AG04449 (cell line): ENCODE measurements at regions of chr7 and their contacts with region 1.

Region 1: GRCh38 chr7:157250605-157251228 is 86.1 kb upstream of the DNAJB6 start:
- DNase-seq: no peak
- H3K4me3 ChIP-seq: no peak overlapping the region
- CTCF ChIP-seq: peak; percentile 77

Region 2: GRCh38 chr7:157211690-157212089 is 39.0 kb before region 1 on chr7:
- CTCF ChIA-PET with region 1: interaction called, 10 read pairs
- POLR2A ChIA-PET with region 1: no interaction called
- DNase-seq: peak; percentile 75
- H3K4me3 ChIP-seq: no peak overlapping the region
- CTCF ChIP-seq: no peak

Region 3: GRCh38 chr7:157228864-157229422 is 21.8 kb before region 1 on chr7:
- CTCF ChIA-PET with region 1: interaction called, 159 read pairs
- POLR2A ChIA-PET with region 1: no interaction called
- DNase-seq: no peak
- H3K4me3 ChIP-seq: no peak overlapping the region
- CTCF ChIP-seq: peak; percentile 71

Region 4: DNA sequence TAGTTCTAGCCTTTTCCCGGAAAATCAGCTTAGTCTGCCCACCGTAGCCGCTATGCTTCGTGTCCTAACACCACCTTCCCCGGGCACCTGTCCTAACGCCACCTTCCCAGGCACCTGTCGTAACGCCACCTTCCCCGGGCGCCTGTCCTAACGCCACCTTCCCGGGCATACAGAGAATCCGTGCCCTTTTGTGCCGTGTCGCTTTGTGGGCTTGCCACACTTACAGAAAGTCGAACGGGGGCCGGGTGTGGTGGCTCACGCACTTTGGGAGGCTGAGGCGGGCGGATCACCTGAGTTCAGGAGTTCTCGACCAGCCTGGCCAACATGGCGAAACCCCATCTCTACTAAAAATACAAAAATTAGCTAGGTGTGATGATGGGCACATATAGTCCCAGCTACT is 12.4 kb after region 1 on chr7:
- CTCF ChIA-PET with region 1: interaction called, 40 read pairs
- POLR2A ChIA-PET with region 1: no interaction called
- DNase-seq: no peak
- H3K4me3 ChIP-seq: no peak overlapping the region
- CTCF ChIP-seq: no peak

Region 5: GRCh38 chr7:157404845-157405481 is 154.2 kb after region 1 on chr7:
- CTCF ChIA-PET with region 1: no interaction called
- POLR2A ChIA-PET with region 1: no interaction called
- DNase-seq: peak; percentile 58
- H3K4me3 ChIP-seq: no peak overlapping the region
- CTCF ChIP-seq: no peak

Region 6: GRCh38 chr7:158353606-158354570 is 1103.2 kb after region 1 on chr7:
- CTCF ChIA-PET with region 1: no interaction called
- POLR2A ChIA-PET with region 1: no interaction called
- DNase-seq: no peak
- H3K4me3 ChIP-seq: no peak overlapping the region
- CTCF ChIP-seq: no peak